ENCODE measurements at regions of chr6 and their contacts with region 1.

Region 1: DNA sequence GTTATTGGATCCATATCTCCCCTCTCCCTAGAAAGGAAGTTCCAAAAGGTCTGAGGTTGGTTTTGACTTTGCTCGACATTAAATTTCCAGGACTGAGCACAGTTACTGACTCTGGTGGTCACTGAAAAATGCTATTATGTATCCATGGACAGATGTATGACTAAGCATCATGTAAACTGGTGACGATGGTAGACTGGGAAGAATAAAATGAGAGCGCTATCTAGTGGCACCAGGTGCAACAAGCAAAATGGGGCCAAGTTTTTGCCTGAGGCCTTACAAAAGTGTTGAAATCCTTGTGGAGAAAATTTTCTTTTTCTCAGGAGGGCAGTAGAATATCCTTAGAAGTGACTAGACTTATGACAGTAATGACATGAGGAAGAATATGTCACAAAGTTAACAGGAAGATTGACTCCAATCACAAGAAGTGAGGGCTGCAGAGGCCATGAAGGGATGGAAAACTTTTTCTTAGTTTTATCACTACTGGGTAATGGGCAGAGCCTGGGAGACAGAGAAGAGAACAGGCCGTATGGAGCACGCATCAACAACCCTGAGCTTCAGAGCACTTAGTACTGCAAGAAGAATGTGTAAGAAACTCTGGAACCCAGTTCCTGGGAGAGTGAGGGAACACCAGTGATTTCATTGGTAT is 88.9 kb upstream of the ELOVL5 start:
- DNase-seq: peak in 4 of 9 experiments; percentile 4 to 56 (median 28)
- ATAC-seq: no peak
- H3K4me3 ChIP-seq: no peak overlapping the region
- H3K4me3 Mint-ChIP-seq: no peak overlapping the region
- H3K27ac ChIP-seq: no peak overlapping the region
- H3K27ac Mint-ChIP-seq: no peak overlapping the region
- H3K4me1 ChIP-seq: no peaks in the 10 kb centered on the region
- H3K4me1 Mint-ChIP-seq: no peaks in the 10 kb centered on the region
- H3K27me3 ChIP-seq: no peaks in the 10 kb centered on the region
- H3K27me3 Mint-ChIP-seq: peaks cover 4% of the 10 kb centered on the region
- CTCF ChIP-seq: peak; percentile 51

Region 2: DNA sequence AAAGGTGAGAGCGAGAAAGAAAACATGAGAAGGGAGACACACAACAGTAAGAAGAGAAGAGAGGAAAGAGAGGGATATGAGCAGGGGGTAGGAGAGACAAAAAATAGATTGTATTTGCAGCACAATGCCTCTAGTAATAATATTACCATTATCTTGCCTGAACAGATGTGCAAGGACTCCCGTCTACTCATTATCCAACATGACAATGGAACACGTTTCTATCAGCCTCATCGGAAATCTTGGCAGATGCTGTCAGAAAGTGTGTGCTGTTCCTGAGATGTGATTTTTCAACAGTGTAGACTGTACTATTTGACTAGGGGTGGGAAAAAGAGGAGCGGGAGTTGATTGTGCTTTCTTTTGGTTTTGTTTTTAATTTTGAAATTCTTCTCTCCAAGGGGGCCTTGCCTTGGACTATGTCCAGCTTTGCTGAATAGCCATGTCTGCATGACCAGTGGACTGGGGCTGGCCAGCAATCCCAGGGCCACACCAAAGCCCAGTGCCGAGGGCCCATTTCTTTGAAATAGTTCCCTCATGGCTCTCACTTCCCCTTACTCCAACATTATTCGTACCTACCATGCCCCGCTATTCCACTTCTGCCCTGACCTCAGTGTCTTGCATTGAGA is 849.5 kb before region 1 on chr6:
- CTCF ChIA-PET with region 1: no interaction called
- POLR2A ChIA-PET with region 1: no interaction called
- intact Hi-C with region 1: loop called in 1 of 2 experiments (anchors 5 kb)
- DNase-seq: no peak
- ATAC-seq: no peak
- H3K4me3 ChIP-seq: no peak overlapping the region
- H3K4me3 Mint-ChIP-seq: no peak overlapping the region
- H3K27ac ChIP-seq: no peak overlapping the region
- H3K27ac Mint-ChIP-seq: no peak overlapping the region
- H3K4me1 ChIP-seq: no peaks in the 10 kb centered on the region
- H3K4me1 Mint-ChIP-seq: no peaks in the 10 kb centered on the region
- H3K27me3 ChIP-seq: no peaks in the 10 kb centered on the region
- H3K27me3 Mint-ChIP-seq: no peaks in the 10 kb centered on the region
- CTCF ChIP-seq: no peak

Measured in CD8-positive, alpha-beta T cell (primary cell).